Left ventricle myocardium inferior (tissue), 1 donor: ENCODE measurements at regions of chr1 and their contacts with region 1.

Region 1: GRCh38 chr1:208029381-208030287 is 118.7 kb upstream of the CD34 start:
- DNase-seq: no peak
- H3K4me3 ChIP-seq: peak overlapping the region; percentile 18
- H3K27ac ChIP-seq: peak overlapping the region; percentile 80
- H3K4me1 ChIP-seq: peaks cover 35% of the 10 kb centered on the region
- H3K27me3 ChIP-seq: no peaks in the 10 kb centered on the region
- CTCF ChIP-seq: no peak

Region 2: DNA sequence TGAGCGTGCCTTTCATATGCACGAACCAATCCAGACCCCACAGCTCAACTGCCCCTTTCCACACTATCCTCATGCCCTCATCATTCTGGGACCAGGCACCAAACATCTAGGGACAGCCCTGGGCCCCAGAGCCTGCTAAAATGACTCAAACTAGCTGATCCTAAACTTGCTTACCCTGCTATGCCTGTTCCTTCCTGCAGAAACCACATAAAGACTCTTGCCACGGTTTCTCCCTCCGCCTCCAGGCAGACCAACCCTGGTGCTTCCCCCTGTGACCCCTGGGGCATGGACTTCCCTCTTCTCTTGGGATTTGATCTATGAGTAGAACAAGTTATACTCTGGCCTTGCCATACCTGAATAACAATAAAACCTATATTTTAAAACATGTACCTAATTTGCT is 19.3 kb after region 1 on chr1:
- intact Hi-C with region 1: no loop called
- DNase-seq: no peak
- H3K4me3 ChIP-seq: no peak overlapping the region
- H3K27ac ChIP-seq: peak overlapping the region; percentile 83
- H3K4me1 ChIP-seq: peaks cover 26% of the 10 kb centered on the region
- H3K27me3 ChIP-seq: no peaks in the 10 kb centered on the region
- CTCF ChIP-seq: no peak

Region 3: DNA sequence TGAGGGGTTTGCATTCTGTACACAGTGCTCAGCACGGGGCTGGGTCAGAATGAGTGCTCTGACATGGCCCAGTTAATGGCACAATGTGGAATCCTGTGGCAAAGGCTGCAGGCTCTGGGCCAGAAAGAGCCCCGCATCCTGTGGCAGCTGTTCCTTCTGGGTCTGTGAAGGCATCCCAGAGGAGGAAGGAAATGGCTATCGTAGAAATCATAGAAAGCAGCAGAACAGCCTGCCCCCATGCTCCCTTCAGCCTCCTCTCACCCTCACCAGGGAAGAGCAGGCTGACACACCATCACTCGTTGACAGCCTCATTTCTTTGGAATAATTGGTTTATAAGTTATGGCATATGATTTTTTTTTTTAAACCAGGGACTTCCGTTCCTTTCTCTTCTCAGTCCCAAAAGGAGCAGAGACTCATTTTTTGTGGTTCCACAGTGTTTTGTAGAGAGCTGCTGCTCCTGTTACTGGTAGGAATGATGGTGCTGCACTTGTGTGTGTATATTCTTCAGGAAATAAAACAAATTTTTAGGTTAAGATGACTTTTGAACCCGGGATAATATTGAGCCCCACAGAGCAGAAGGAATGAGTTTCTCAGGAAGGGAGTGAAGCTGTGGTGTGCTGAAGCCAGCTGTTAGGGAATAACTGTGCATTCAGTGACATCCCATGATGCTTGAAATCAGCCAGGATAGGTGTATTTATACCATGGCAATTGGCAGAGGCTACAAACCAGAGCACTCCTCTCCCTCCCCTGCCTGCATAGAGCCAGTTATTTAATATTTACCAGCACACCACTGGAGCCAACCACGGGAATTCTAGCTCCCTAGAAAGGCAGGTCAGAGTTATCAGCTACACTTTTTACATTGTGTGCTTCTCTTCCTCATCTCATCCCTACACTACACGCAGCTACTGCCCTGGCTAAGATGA is 182.5 kb after region 1 on chr1:
- intact Hi-C with region 1: no loop called
- DNase-seq: no peak
- H3K4me3 ChIP-seq: no peak overlapping the region
- H3K27ac ChIP-seq: peak overlapping the region; percentile 83
- H3K4me1 ChIP-seq: peaks cover 88% of the 10 kb centered on the region
- H3K27me3 ChIP-seq: no peaks in the 10 kb centered on the region
- CTCF ChIP-seq: no peak

Region 4: GRCh38 chr1:208245185-208245705 is 215.6 kb after region 1 on chr1:
- intact Hi-C with region 1: loop called (anchors 10 kb)
- DNase-seq: peak; percentile 88
- H3K4me3 ChIP-seq: peak overlapping the region; percentile 94
- H3K27ac ChIP-seq: peak overlapping the region; percentile 95
- H3K4me1 ChIP-seq: peaks cover 60% of the 10 kb centered on the region
- H3K27me3 ChIP-seq: no peaks in the 10 kb centered on the region
- CTCF ChIP-seq: peak; percentile 90